ENCODE measurements at regions of chr13 and their contacts with region 1.

Region 1: GRCh38 chr13:95301183-95301967 is at the start of gene ABCC4:
- DNase-seq: peak in 6 of 10 donors; percentile 22 to 58 (median 38)
- H3K4me3 ChIP-seq: peak within 1 kb of the TSS; percentile 46 to 85 (median 72)
- H3K27ac ChIP-seq: peak within 1 kb of the TSS in 37 of 59 donors; percentile 3 to 77 (median 47)
- H3K27me3 ChIP-seq: no peaks in the 10 kb centered on the region
- CTCF ChIP-seq: peak in 3 of 56 donors; percentile 14 to 17 (median 16)
- total RNA-seq, gene ABCC4: 4.4 to 22.5 (median 9.2) TPM

Region 2: DNA sequence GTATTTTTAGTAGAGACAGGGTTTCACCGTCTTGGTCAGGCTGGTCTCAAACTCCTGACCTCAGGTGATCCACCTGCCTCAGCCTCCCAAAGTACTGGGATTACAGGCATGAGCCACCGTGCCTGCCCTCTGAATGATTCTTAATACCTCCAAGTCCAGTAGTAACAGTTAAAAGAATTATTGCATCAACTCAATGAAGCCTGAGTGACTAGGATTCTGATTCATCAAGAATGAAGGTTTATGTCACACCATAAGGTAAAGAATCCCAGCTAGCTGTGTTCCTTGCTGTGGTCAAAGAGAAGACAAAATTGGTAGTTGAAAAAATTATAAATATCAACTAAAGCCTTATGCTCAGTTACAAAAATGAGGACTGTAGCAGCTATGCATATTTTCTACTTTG is 81.0 kb after region 1 on chr13:
- intact Hi-C with region 1: loop called (anchors 5 to 10 kb)
- DNase-seq: no peak
- H3K4me3 ChIP-seq: no peak overlapping the region
- H3K27ac ChIP-seq: no peak overlapping the region
- H3K27me3 ChIP-seq: no peaks in the 10 kb centered on the region
- CTCF ChIP-seq: no peak

Region 3: GRCh38 chr13:95387733-95388207 is 86.4 kb after region 1 on chr13:
- intact Hi-C with region 1: loop called (anchors 5 to 10 kb)
- DNase-seq: no peak
- H3K4me3 ChIP-seq: peak overlapping the region in 1 of 59 donors; percentile 4
- H3K27ac ChIP-seq: no peak overlapping the region
- H3K27me3 ChIP-seq: peaks cover 0 to 6% (median 0%) of the 10 kb centered on the region in 45 donors
- CTCF ChIP-seq: peak in 1 of 56 donors; percentile 9

Region 4: DNA sequence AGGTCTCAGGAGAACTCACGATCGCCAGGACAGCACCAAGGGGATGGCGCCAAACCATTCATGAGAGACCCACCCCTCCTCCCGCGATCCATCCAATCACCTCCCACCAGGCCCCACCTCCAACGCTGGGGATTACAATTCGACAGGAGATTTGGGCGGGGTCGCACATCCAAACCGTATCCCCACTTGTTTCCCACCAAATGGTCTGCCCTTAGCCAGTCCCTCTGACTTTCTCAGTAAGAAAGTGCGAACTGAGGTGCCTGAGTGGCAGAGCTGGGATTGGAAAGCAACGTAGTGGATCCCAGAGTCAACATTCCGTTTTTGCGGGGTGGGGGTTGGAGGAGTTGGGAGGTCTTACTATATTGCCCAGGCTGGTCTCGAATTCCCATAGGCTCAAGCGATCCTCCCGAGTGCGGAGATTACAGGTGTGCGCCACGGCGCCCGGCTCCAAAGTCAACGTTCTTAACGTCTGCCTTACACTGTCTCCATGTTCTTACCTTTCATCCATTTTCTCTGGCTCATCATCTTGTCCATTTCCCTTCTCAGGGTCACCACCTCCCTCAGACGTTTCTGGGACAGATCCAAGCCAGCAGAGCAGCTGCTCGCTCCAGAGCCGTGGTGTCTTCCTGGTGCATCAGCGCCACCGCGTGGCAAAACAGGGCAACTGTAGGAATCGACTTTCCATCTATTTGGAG is 102.6 kb after region 1 on chr13:
- intact Hi-C with region 1: loop called in 1 of 2 experiments (anchors 5 kb)
- DNase-seq: peak; percentile 43 to 91 (median 83)
- H3K4me3 ChIP-seq: peak overlapping the region; percentile 18 to 70 (median 54)
- H3K27ac ChIP-seq: peak overlapping the region in 1 of 59 donors; percentile 7
- H3K27me3 ChIP-seq: no peaks in the 10 kb centered on the region
- CTCF ChIP-seq: peak; percentile 89 to 99 (median 95)